ENCODE measurements at regions of chr15 and their contacts with region 1.

Region 1: GRCh38 chr15:56798639-56799038 is 65.3 kb upstream of the ZNF280D start:
- DNase-seq: peak; percentile 20 to 58
- ATAC-seq: peak; percentile 74 to 91 (median 82)
- H3K4me3 ChIP-seq: no peak overlapping the region
- H3K27ac ChIP-seq: peak overlapping the region; percentile 23
- H3K4me1 ChIP-seq: peaks cover 17% of the 10 kb centered on the region
- H3K27me3 ChIP-seq: no peaks in the 10 kb centered on the region
- CTCF ChIP-seq: no peak

Region 2: GRCh38 chr15:56732921-56733797 is 65.5 kb before region 1 on chr15 and contains the start of gene ZNF280D:
- intact Hi-C with region 1: loop called in 1 of 2 experiments (anchors 2 kb)
- DNase-seq: peak; percentile 92 to 95
- ATAC-seq: peak; percentile 90 to 95 (median 94)
- H3K4me3 ChIP-seq: peak within 1 kb of the TSS; percentile 81
- H3K27ac ChIP-seq: peak within 1 kb of the TSS; percentile 92
- H3K4me1 ChIP-seq: peaks cover 32% of the 10 kb centered on the region
- H3K27me3 ChIP-seq: no peaks in the 10 kb centered on the region
- CTCF ChIP-seq: no peak
- total RNA-seq, gene ZNF280D: 20.8 to 25.3 (median 23.6) TPM

Measured in psoas muscle (tissue), 8 donors.